Activated naive CD8-positive, alpha-beta T cell treated with anti-CD3 and anti-CD28 coated beads, Interleukin-2, amount 10 ng/mL, durations not matched to agents 7 days and 5 days (primary cell): ENCODE measurements at regions of chr2 and their contacts with region 1.

Region 1: GRCh38 chr2:102278720-102279390 is 32.5 kb upstream of the IL1RL1 start:
- DNase-seq: no peak
- ATAC-seq: no peak
- H3K4me3 Mint-ChIP-seq: peak overlapping the region; percentile 42
- H3K27ac Mint-ChIP-seq: peak overlapping the region; percentile 67
- H3K4me1 Mint-ChIP-seq: peaks cover 59% of the 10 kb centered on the region
- H3K27me3 Mint-ChIP-seq: no peaks in the 10 kb centered on the region

Region 2: GRCh38 chr2:102266204-102266603 is 12.7 kb before region 1 on chr2:
- POLR2A ChIA-PET with region 1: interaction called, 11 read pairs
- DNase-seq: no peak
- ATAC-seq: no peak
- H3K4me3 Mint-ChIP-seq: no peak overlapping the region
- H3K27ac Mint-ChIP-seq: peak overlapping the region; percentile 70
- H3K4me1 Mint-ChIP-seq: peaks cover 15% of the 10 kb centered on the region
- H3K27me3 Mint-ChIP-seq: peaks cover 2% of the 10 kb centered on the region

Region 3: GRCh38 chr2:102291318-102292251 is 12.7 kb after region 1 on chr2:
- POLR2A ChIA-PET with region 1: interaction called, 21 read pairs
- DNase-seq: no peak
- ATAC-seq: peak; percentile 68
- H3K4me3 Mint-ChIP-seq: peak overlapping the region; percentile 53
- H3K27ac Mint-ChIP-seq: peak overlapping the region; percentile 75
- H3K4me1 Mint-ChIP-seq: peaks cover 53% of the 10 kb centered on the region
- H3K27me3 Mint-ChIP-seq: peaks cover 5% of the 10 kb centered on the region